ENCODE measurements at regions of chr11 and their contacts with region 1.

Region 1: DNA sequence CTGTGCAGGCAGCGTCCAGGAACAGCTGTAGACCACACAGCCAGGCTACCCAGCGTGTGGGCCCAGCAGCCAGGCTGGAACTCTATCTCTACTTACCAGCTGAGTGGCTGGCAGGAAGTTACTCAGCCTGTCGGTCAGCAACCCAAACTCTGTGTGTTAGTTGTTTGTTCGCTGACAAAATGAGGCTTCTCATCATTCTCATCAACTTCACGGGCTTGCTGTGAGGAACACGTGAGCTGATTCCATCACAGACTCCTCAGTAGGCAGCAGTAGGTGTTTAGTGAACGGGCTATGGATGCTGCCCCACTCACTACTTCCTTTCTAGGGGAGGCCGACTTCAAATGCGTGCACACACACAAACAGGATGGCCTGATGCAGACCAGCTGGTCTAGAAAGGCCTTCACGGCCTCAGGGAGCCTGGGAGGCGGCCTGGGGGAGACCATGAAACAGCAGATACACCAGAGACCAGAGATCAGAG is 830 bp upstream of the SPDYC start:
- DNase-seq: peak; percentile 88
- H3K4me3 ChIP-seq: no peak overlapping the region
- H3K27ac ChIP-seq: peak overlapping the region; percentile 92
- H3K4me1 ChIP-seq: peaks cover 15% of the 10 kb centered on the region
- H3K27me3 ChIP-seq: no peaks in the 10 kb centered on the region
- CTCF ChIP-seq: no peak
- POLR2A ChIP-seq: peak; percentile 69

Region 2: DNA sequence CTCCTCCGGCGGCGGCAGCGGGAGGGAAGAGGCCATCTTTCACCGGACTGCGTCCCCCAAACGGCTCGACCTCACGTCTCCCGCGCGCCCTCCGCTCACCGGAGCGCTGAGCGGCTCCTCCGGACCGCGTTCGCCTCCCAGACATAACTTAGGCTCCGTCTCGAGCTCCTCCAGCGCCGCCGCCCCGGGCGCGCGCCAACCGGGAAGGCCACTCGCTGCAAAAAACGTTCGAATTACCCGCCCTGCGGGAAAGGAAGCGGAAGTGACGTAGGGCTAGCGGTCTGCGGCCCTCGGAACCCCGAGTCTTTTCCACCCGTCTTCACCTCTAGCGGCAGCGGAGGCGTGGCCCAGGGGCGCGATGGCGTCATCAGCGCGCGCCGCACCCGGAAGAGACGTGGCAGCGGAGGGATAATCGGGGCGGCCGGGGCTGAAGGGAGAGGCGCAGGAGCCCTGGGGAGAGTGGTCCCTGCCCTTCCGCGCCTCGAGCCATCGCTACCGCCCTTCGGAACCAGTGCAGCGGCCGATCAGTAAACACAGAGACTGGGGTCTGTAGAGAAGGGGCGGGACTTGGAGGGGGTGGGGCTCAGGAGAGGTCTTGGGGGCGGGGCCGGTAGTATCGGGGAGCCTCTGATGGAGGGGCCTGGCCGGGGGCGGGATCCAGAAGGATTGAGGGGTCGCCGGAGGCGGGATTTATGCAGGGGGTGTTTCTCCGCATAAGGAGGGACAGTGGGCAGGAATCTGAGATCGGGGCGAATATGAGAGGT is 85.2 kb before region 1 on chr11 and contains the starts of genes CDCA5 and ZFPL1:
- CTCF ChIA-PET with region 1: no interaction called
- POLR2A ChIA-PET with region 1: no interaction called
- dilution Hi-C with region 1: no loop called
- intact Hi-C with region 1: no loop called
- DNase-seq: peak; percentile 96
- H3K4me3 ChIP-seq: peak within 1 kb of the TSS; percentile 58 to 92 (median 83)
- H3K27ac ChIP-seq: peak within 1 kb of the TSS; percentile 61
- H3K4me1 ChIP-seq: peaks cover 17% of the 10 kb centered on the region
- H3K27me3 ChIP-seq: no peaks in the 10 kb centered on the region
- CTCF ChIP-seq: no peak
- POLR2A ChIP-seq: no peak
- total RNA-seq, gene CDCA5: 34.1 and 35.7 TPM in 2 replicates
- total RNA-seq, gene ZFPL1: 37.6 and 45.1 TPM in 2 replicates

Region 3: DNA sequence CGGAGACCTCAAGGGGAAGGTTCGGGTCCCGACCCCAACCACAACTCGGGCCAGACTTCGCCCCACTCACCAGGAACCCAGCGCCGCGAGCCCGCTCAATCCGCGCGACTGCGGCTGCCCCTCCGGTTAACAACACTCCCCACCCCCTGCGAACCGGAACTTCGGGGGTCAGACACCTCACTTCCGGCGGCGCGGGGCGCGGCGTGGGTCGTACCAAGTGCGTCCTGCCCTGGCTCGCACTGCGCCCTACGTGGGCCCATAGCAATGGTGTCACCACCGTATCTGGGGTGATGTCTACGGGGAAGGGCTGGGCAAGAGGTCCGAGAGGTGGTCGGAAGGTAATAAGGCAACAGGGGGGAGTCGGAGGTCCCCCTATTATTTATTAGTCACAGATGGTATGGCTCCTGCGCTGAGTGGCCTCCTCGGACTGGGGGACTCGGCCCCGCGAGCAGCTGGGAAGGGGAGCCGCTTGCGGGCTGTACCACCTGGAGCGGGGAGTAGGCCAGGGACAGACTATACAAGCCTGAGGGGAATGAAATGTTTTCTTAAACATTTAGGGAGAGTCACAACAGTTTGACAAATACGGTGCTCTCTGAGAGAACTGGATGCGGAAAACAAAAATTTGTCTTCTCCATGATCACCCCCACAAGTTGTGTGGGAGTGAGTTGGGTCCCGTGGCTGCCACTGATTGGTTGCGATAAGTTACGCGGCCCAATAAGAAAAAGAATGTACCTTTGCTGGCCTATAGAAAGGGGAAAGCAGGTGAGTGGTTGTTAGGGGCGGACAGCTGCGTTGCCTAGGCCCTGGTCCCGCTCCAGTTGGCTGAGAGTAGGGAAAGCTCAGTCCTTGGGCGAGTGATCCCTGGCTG is 34.6 kb before region 1 on chr11 and contains the start of gene SYVN1:
- CTCF ChIA-PET with region 1: interaction called, 6 read pairs
- POLR2A ChIA-PET with region 1: no interaction called
- dilution Hi-C with region 1: no loop called
- intact Hi-C with region 1: loop called (anchors 1 kb)
- DNase-seq: peak; percentile 97
- H3K4me3 ChIP-seq: peak within 1 kb of the TSS; percentile 51 to 62 (median 52)
- H3K27ac ChIP-seq: peak within 1 kb of the TSS; percentile 89
- H3K4me1 ChIP-seq: peaks cover 12% of the 10 kb centered on the region
- H3K27me3 ChIP-seq: no peaks in the 10 kb centered on the region
- CTCF ChIP-seq: no peak
- POLR2A ChIP-seq: peak; percentile 87
- total RNA-seq, gene SYVN1: 34.5 and 36.0 TPM in 2 replicates

Region 4: DNA sequence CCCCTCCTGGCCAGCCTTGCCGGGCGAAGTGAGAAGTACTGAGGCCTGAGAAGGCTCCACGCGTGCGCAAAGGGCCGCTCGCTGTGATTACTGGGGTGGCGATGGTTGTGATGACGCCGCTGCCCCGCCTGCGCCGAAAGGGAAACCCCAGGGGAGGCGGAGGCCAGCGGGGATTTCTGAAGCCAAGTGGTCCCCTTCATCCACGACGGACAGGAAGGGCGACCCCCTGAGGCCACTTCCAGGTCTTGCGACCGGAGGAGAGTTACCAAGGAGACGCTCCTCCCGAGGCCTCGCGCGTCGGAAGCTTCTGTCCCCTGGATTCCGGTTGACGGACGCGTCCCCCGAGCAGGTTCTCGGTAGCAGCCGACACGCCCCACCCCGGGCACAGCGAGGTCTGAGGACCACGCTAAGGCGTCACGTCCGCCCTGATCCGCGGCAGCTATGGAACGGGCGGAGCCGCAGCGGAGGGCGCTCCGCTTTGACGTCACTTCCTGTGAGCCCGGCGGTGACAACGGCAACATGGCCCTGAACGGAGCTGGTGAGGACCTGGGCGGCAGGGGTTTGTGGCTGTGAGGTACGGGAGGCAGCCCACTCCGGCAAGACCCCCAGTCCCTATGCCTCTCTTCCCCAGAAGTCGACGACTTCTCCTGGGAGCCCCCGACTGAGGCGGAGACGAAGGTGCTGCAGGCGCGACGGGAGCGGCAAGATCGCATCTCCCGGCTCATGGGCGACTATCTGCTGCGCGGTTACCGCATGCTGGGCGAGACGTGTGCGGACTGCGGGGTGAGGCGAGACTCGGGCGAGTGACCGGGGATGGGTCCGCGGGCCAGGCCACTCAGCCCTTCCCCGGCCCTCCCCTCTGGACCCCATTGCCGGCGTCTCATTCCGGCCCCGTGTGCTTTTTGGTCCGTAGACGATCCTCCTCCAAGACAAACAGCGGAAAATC is 401.0 kb after region 1 on chr11 and contains the start of gene ZNRD2:
- CTCF ChIA-PET with region 1: no interaction called
- POLR2A ChIA-PET with region 1: no interaction called
- dilution Hi-C with region 1: no loop called
- intact Hi-C with region 1: no loop called
- DNase-seq: peak; percentile 99
- H3K4me3 ChIP-seq: peak within 1 kb of the TSS; percentile 55 to 66 (median 63)
- H3K27ac ChIP-seq: peak within 1 kb of the TSS; percentile 61
- H3K4me1 ChIP-seq: peaks cover 51% of the 10 kb centered on the region
- H3K27me3 ChIP-seq: no peaks in the 10 kb centered on the region
- CTCF ChIP-seq: peak; percentile 29 to 47
- POLR2A ChIP-seq: peak; percentile 84
- total RNA-seq, gene ZNRD2: 40.8 and 46.9 TPM in 2 replicates